H1 (cell line): ENCODE measurements at regions of chr2 and their contacts with region 1.

Region 1: DNA sequence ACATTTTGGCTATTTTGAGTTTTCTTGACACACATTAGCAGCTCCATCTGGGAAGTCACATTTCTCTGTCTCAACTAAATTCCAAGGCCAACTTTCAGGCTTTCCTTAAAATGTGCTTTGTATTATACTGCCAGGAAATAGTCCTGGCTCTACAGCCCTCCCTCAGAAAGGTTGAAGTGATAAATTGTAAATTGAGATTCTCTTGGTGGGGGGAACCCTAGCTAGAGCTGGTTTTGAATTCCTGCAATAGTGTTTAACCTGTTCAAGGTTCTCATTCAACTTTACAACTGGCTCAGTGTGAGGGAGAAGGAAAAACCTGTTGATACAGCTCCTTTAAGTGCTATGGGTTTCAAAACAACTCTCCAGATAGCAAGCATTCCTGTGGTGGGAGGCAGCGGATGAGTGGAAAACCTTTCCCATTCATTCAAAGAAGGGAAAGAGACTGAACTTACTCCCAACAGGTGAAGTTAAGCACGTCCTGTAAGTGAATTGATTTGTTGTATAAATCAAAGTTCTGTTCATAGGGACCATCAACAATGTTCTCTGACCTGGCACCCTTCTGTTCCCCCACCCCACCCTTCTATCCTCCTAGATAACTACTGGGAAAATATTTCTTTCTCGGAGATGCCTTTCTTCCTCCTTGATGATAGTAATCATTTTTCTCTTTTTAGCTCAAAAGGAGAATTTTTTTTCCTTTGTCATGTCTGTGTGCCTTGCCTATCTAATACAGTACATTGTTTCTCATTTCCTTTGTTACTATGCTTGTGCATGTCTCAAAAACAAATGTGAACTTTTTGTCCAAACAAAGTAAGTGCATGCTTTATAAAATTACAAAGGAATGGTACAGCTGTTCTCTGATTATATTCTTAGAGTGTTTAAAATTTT is 44.2 kb upstream of the SLC39A10 start:
- DNase-seq: peak in 1 of 2 experiments; percentile 72
- H3K4me3 ChIP-seq: peak overlapping the region; percentile 19 to 50 (median 21); a peak in 6 of 8 replicates
- H3K27ac ChIP-seq: peak overlapping the region; percentile 77
- H3K4me1 ChIP-seq: peaks cover 2 to 18% (median 6%) of the 10 kb centered on the region in 4 experiments; a peak in 6 of 7 replicates
- H3K27me3 ChIP-seq: no peaks in the 10 kb centered on the region
- CTCF ChIP-seq: no peak
- EP300 ChIP-seq: peak in 1 of 2 experiments; percentile 78; a peak in 1 of 3 replicates
- POLR2A ChIP-seq: peak in 1 of 2 experiments; percentile 80; a peak in 2 of 3 replicates
- RAD21 ChIP-seq: 0 out of 4 replicates have a peak, but pooled peaks of 1 of the 2 experiments have one; percentile 7

Region 2: GRCh38 chr2:195124391-195125079 is 488.3 kb before region 1 on chr2:
- CTCF ChIA-PET with region 1: no interaction called
- POLR2A ChIA-PET with region 1: no interaction called
- DNase-seq: no peak
- H3K4me3 ChIP-seq: no peak overlapping the region
- H3K27ac ChIP-seq: no peak overlapping the region
- H3K4me1 ChIP-seq: no peaks in the 10 kb centered on the region; a peak in 1 of 7 replicates
- H3K27me3 ChIP-seq: no peaks in the 10 kb centered on the region
- CTCF ChIP-seq: no peak
- EP300 ChIP-seq: no peak
- POLR2A ChIP-seq: no peak
- RAD21 ChIP-seq: no peak

Region 3: GRCh38 chr2:195626507-195626906 is 13.7 kb after region 1 on chr2:
- CTCF ChIA-PET with region 1: interaction called, 3 read pairs
- POLR2A ChIA-PET with region 1: interaction called, 10 read pairs
- DNase-seq: no peak
- H3K4me3 ChIP-seq: no peak overlapping the region
- H3K27ac ChIP-seq: no peak overlapping the region
- H3K4me1 ChIP-seq: no peaks in the 10 kb centered on the region
- H3K27me3 ChIP-seq: no peaks in the 10 kb centered on the region
- CTCF ChIP-seq: no peak
- EP300 ChIP-seq: no peak
- POLR2A ChIP-seq: no peak
- RAD21 ChIP-seq: no peak